ENCODE measurements at regions of chr17 and their contacts with region 1.

Region 1: DNA sequence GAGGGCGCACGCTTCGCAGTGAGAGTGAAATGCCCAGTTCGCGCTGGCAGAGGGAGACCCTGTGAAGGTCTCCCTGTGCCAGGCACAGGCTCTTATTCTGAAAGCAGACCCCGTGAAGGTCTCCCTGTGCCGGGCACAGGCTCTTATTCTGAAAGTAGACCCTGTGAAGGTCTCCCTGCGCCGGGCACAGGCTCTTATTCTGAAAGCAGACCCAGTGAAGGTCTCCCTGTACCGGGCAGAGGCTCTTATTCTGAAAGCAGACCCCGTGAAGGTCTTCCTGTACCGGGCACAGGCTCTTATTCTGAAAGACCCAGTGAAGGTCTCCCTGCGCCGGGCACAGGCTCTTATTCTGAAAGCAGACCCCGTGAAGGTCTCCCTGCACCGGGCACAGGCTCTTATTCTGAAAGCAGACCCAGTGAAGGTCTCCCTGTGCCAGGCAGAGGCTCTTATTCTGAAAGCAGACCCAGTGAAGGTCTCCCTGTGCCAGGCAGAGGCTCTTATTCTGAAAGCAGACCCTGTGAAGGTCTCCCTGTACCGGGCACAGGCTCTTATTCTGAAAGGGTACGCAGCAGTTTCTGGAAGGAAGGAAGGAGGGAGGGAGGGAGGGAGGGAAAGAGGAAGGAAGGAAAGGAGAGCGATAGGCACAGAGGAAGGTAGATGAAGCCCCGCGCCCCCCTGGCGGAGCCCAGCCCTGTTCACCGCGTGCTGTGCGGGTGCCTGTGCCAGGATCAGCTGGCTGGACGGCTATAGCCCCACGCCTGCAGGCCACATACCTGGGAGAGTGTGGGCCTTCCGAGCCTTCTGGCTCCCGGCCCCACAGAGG is 55.3 kb downstream of the WDR45B start:
- DNase-seq: peak; percentile 87
- ATAC-seq: peak; percentile 11
- H3K4me3 ChIP-seq: peak overlapping the region; percentile 7 to 70 (median 38); a peak in 4 of 6 replicates
- H3K27ac ChIP-seq: peak overlapping the region; percentile 72
- H3K4me1 ChIP-seq: peaks cover 27% of the 10 kb centered on the region
- H3K27me3 ChIP-seq: no peaks in the 10 kb centered on the region
- CTCF ChIP-seq: no peak
- EP300 ChIP-seq: no peak; a peak in 1 of 4 replicates
- POLR2A ChIP-seq: no peak
- RAD21 ChIP-seq: no peak

Region 2: DNA sequence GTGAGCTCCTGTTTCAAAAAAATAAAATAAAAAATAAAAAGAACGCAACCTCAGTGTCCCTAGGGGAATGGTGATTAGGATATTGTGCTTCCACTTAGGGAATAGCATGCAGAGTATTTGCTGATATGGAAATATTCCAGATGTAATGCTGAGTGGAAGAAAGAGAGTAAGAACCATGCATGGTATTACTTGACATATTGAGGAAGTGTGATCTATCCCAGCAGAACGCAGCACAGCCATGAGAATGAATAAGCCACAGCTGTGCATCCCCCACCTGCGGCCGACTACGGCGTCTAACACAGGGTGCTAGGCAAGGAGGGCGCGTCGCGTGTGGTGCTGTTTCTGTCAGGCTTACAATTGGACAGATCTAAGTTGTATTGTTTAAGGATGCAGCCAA is 24.0 kb before region 1 on chr17:
- CTCF ChIA-PET with region 1: no interaction called
- POLR2A ChIA-PET with region 1: interaction called, 15 read pairs
- in situ Hi-C with region 1: no loop called
- intact Hi-C with region 1: no loop called
- DNase-seq: no peak
- ATAC-seq: no peak
- H3K4me3 ChIP-seq: 0 out of 6 replicates have a peak overlapping the region, but pooled peaks of 1 of the 3 experiments have one; percentile 8
- H3K27ac ChIP-seq: peak overlapping the region; percentile 87
- H3K4me1 ChIP-seq: peaks cover 65% of the 10 kb centered on the region
- H3K27me3 ChIP-seq: no peaks in the 10 kb centered on the region
- CTCF ChIP-seq: no peak
- EP300 ChIP-seq: no peak
- POLR2A ChIP-seq: no peak
- RAD21 ChIP-seq: no peak

Region 3: GRCh38 chr17:82582213-82582612 is 10.8 kb before region 1 on chr17:
- CTCF ChIA-PET with region 1: no interaction called
- POLR2A ChIA-PET with region 1: no interaction called
- in situ Hi-C with region 1: no loop called
- intact Hi-C with region 1: no loop called
- DNase-seq: no peak
- ATAC-seq: no peak
- H3K4me3 ChIP-seq: no peak overlapping the region
- H3K27ac ChIP-seq: no peak overlapping the region
- H3K4me1 ChIP-seq: no peaks in the 10 kb centered on the region
- H3K27me3 ChIP-seq: no peaks in the 10 kb centered on the region
- CTCF ChIP-seq: no peak
- EP300 ChIP-seq: no peak
- POLR2A ChIP-seq: no peak
- RAD21 ChIP-seq: no peak

Measured in HepG2 (cell line).